Activated CD4-positive, alpha-beta T cell treated with anti-CD3 and anti-CD28 coated beads for 36 hours (primary cell): ENCODE measurements at regions of chr4 and their contacts with region 1.

Region 1: GRCh38 chr4:115090483-115091075 is 22.8 kb downstream of the NDST4 start:
- DNase-seq: no peak
- ATAC-seq: no peak
- H3K4me3 Mint-ChIP-seq: no peak overlapping the region
- H3K27ac Mint-ChIP-seq: no peak overlapping the region
- H3K4me1 Mint-ChIP-seq: no peaks in the 10 kb centered on the region
- H3K27me3 Mint-ChIP-seq: peaks cover 2% of the 10 kb centered on the region

Region 2: GRCh38 chr4:114417214-114417613 is 673.4 kb before region 1 on chr4:
- CTCF ChIA-PET with region 1: no interaction called
- POLR2A ChIA-PET with region 1: no interaction called
- intact Hi-C with region 1: no loop called
- DNase-seq: no peak
- ATAC-seq: no peak
- H3K4me3 Mint-ChIP-seq: no peak overlapping the region
- H3K27ac Mint-ChIP-seq: no peak overlapping the region
- H3K4me1 Mint-ChIP-seq: no peaks in the 10 kb centered on the region
- H3K27me3 Mint-ChIP-seq: peaks cover 6% of the 10 kb centered on the region

Region 3: DNA sequence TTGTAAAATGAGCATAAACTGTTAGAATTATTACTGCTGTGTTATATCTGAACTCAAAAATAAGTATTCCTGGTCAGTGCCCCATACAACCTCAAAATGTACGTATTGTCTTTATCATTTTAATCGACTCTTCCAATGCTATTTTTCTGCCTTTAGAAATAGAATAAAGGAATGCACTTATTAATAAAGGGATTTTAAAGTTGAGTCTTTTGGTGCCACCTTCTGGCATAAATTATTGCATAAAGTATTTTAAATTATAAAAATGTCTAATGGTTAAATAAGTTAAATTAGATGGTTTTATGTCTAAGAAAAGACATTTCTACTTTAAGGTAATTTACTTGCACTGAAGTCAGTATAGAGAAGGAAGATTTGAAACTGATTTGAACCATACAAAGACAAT is 446.8 kb after region 1 on chr4:
- CTCF ChIA-PET with region 1: no interaction called
- POLR2A ChIA-PET with region 1: no interaction called
- intact Hi-C with region 1: loop called in 1 of 2 experiments (anchors 10 kb)
- DNase-seq: no peak
- ATAC-seq: no peak
- H3K4me3 Mint-ChIP-seq: no peak overlapping the region
- H3K27ac Mint-ChIP-seq: no peak overlapping the region
- H3K4me1 Mint-ChIP-seq: no peaks in the 10 kb centered on the region
- H3K27me3 Mint-ChIP-seq: no peaks in the 10 kb centered on the region

Region 4: GRCh38 chr4:115851918-115852766 is 761.6 kb after region 1 on chr4:
- CTCF ChIA-PET with region 1: interaction called, 4 read pairs
- POLR2A ChIA-PET with region 1: no interaction called
- intact Hi-C with region 1: loop called in 1 of 2 experiments (anchors 1 kb)
- DNase-seq: peak; percentile 49
- ATAC-seq: no peak
- H3K4me3 Mint-ChIP-seq: no peak overlapping the region
- H3K27ac Mint-ChIP-seq: no peak overlapping the region
- H3K4me1 Mint-ChIP-seq: no peaks in the 10 kb centered on the region
- H3K27me3 Mint-ChIP-seq: no peaks in the 10 kb centered on the region